ENCODE measurements at regions of chr12 and their contacts with region 1.

Region 1: GRCh38 chr12:72465940-72466637 is 193.9 kb downstream of the TRHDE start:
- DNase-seq: no peak
- ATAC-seq: no peak
- H3K4me3 ChIP-seq: no peak overlapping the region
- H3K27ac ChIP-seq: no peak overlapping the region
- H3K4me1 ChIP-seq: peaks cover 11% of the 10 kb centered on the region
- H3K27me3 ChIP-seq: no peaks in the 10 kb centered on the region
- CTCF ChIP-seq: no peak

Region 2: DNA sequence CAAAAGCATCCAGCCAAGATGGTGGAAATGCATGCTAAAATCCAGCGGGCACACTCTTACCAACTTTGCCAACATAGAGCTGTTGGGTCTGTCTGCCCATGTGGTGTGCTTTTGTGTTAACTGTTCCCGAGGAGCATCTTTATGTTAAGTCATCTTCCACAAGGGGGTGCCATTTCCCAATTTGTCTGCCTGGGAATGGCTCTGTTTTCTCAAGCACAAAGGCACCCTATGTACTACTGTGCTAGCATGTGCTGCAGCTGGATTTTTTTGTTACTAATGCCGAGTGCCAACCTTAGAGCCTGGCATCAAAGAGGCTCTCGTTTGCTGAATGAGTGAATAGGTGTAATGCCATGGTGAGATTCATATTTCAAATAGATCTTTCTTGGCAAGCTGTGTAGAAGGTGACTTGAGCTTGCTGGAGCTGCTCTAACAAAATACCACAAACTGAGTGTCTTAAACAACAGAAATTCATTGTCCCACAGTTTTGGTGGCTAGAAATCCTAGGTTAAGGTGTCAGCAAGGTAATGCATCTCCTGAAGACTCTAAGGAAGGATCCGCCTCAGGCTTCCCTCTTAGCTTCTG is 119.6 kb before region 1 on chr12:
- intact Hi-C with region 1: loop called in 1 of 2 experiments (anchors 10 kb)
- DNase-seq: peak in 1 of 2 donors; percentile 12
- ATAC-seq: peak in 3 of 4 donors; percentile 69 to 85 (median 83)
- H3K4me3 ChIP-seq: no peak overlapping the region
- H3K27ac ChIP-seq: no peak overlapping the region
- H3K4me1 ChIP-seq: no peaks in the 10 kb centered on the region
- H3K27me3 ChIP-seq: no peaks in the 10 kb centered on the region
- CTCF ChIP-seq: peak; percentile 65

Region 3: DNA sequence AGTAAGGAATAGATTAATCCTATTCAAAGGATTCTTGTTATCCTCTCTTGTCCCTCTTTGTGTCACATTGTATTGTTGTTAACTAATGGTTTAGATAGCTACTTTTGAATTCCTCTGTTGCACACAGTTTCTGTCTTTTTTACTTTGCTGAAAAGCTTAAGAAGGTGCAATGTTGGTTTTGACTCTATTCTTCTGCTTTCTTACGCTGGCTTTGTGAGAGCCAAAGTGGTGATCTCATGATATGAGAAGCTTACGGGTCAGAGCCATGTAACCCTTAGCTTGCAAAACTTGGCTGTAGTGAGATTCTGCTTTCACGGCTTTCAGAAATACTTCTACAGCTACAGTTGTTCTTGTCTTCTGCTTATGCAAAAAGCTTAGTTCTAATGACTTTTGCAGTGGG is 45.8 kb after region 1 on chr12:
- intact Hi-C with region 1: no loop called
- DNase-seq: no peak
- ATAC-seq: no peak
- H3K4me3 ChIP-seq: peak overlapping the region; percentile 17
- H3K27ac ChIP-seq: no peak overlapping the region
- H3K4me1 ChIP-seq: no peaks in the 10 kb centered on the region
- H3K27me3 ChIP-seq: no peaks in the 10 kb centered on the region
- CTCF ChIP-seq: no peak

Region 4: GRCh38 chr12:72570602-72571001 is 104.5 kb after region 1 on chr12:
- intact Hi-C with region 1: no loop called
- DNase-seq: no peak
- ATAC-seq: no peak
- H3K4me3 ChIP-seq: no peak overlapping the region
- H3K27ac ChIP-seq: no peak overlapping the region
- H3K4me1 ChIP-seq: no peaks in the 10 kb centered on the region
- H3K27me3 ChIP-seq: no peaks in the 10 kb centered on the region
- CTCF ChIP-seq: no peak